ENCODE measurements at regions of chr10 and their contacts with region 1.

Region 1: DNA sequence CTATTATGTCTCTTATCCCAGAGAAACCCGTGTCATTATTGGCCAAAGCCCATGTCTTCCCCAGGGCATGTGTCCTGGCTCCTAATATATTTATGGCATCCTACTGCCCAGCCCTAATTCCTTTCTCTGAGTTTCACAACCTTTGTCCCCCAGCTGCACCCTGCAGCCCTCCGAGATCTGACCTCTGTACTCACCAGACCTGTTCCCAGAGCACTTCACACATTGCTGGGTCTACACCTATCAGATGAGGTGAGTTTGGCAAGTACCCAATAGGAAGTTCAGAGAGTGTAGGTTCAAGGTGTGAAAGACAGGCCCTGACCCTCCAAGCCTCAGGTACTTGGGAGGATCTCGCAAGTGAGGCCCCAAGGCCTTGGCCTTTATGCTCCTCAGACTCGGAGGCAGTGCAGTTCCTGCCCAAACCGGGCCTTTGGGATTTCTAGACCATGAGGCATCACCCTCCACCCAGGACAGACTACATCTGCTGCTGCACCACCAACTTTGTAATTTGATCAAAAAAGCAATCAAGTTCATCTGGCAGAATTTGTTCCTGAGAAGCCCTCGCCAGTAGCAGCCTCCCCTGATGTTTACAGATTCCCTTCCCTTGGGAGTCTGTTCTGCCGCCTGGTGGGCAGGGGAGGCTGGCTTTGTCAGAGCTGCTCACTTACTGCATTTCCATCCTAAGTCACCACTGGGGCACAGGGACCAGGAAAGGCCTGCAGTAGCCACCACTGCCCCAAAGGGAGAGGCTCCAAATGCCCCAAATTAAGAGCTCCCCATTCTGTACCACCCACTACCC is 2.2 kb downstream of the CAMK2G start:
- DNase-seq: no peak
- H3K4me3 ChIP-seq: peak overlapping the region; percentile 81 to 93
- H3K27ac ChIP-seq: peak overlapping the region; percentile 86 to 88
- H3K4me1 ChIP-seq: peaks cover 0 to 87% (median 77%) of the 10 kb centered on the region in 4 donors
- H3K27me3 ChIP-seq: no peaks in the 10 kb centered on the region
- CTCF ChIP-seq: peak; percentile 35 to 44

Region 2: GRCh38 chr10:73848821-73849489 is 23.2 kb before region 1 on chr10:
- intact Hi-C with region 1: loop called (anchors 2 kb)
- DNase-seq: peak; percentile 86 to 91
- H3K4me3 ChIP-seq: no peak overlapping the region
- H3K27ac ChIP-seq: peak overlapping the region; percentile 86 to 88
- H3K4me1 ChIP-seq: peaks cover 0 to 52% (median 45%) of the 10 kb centered on the region in 4 donors
- H3K27me3 ChIP-seq: no peaks in the 10 kb centered on the region
- CTCF ChIP-seq: peak; percentile 100

Measured in tibial artery (tissue), 4 donors.